Ascending aorta (tissue), 2 donors: ENCODE measurements at regions of chr15 and their contacts with region 1.

Region 1: GRCh38 chr15:24761704-24762302 is 86.2 kb downstream of the NPAP1 start:
- DNase-seq: no peak
- H3K4me3 ChIP-seq: no peak overlapping the region
- H3K27ac ChIP-seq: no peak overlapping the region
- H3K4me1 ChIP-seq: no peaks in the 10 kb centered on the region
- H3K27me3 ChIP-seq: no peaks in the 10 kb centered on the region
- CTCF ChIP-seq: peak in 2 of 3 experiments; percentile 33 to 43

Region 2: GRCh38 chr15:25501828-25502446 is 740.1 kb after region 1 on chr15:
- intact Hi-C with region 1: loop called (anchors 5 kb)
- DNase-seq: no peak
- H3K4me3 ChIP-seq: peak overlapping the region in 1 of 2 donors; percentile 40
- H3K27ac ChIP-seq: no peak overlapping the region
- H3K4me1 ChIP-seq: peaks cover 0 to 3% of the 10 kb centered on the region in 2 donors
- H3K27me3 ChIP-seq: no peaks in the 10 kb centered on the region
- CTCF ChIP-seq: peak; percentile 43 to 73 (median 68)